Adrenal gland (tissue), 19 donors: ENCODE measurements at regions of chr11 and their contacts with region 1.

Region 1: GRCh38 chr11:79400717-79401686 is 39.8 kb downstream of the TENM4 start:
- DNase-seq: peak; percentile 72 to 88 (median 80)
- H3K4me3 ChIP-seq: no peak overlapping the region
- H3K27ac ChIP-seq: no peak overlapping the region
- H3K4me1 ChIP-seq: peaks cover 0 to 8% of the 10 kb centered on the region in 2 donors
- H3K27me3 ChIP-seq: no peaks in the 10 kb centered on the region
- CTCF ChIP-seq: peak; percentile 63 to 87 (median 80)
- POLR2A ChIP-seq: no peak

Region 2: DNA sequence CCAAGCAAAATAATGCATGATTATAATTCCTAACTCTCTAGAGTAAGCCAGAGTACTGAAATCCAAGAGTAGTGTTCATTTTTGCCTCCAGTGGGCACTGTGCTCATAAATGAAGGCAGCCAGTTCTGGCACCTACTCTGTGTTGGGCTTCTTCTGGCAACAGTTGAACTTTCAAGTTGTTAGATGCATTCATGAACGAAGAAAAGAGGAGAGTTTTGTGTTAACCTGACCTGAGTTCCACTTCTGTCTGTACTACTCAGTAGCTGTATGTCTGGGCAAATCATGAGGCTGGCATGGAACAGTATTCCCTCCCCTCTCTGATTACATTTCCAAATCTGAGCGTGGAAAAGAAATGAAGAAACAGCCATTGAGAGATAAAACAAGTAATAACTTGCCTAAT is 60.1 kb after region 1 on chr11:
- intact Hi-C with region 1: no loop called
- DNase-seq: peak in 6 of 7 donors; percentile 17 to 66 (median 48)
- H3K4me3 ChIP-seq: no peak overlapping the region
- H3K27ac ChIP-seq: no peak overlapping the region
- H3K4me1 ChIP-seq: no peaks in the 10 kb centered on the region
- H3K27me3 ChIP-seq: no peaks in the 10 kb centered on the region
- CTCF ChIP-seq: peak; percentile 34 to 64 (median 54)
- POLR2A ChIP-seq: no peak

Region 3: GRCh38 chr11:79493555-79494171 is 92.7 kb after region 1 on chr11:
- intact Hi-C with region 1: loop called in 1 of 2 experiments (anchors 2 kb)
- DNase-seq: peak; percentile 73 to 86 (median 78)
- H3K4me3 ChIP-seq: no peak overlapping the region
- H3K27ac ChIP-seq: no peak overlapping the region
- H3K4me1 ChIP-seq: no peaks in the 10 kb centered on the region
- H3K27me3 ChIP-seq: no peaks in the 10 kb centered on the region
- CTCF ChIP-seq: peak; percentile 82 to 86 (median 84)
- POLR2A ChIP-seq: no peak